Spleen (tissue), 13 donors: ENCODE measurements at regions of chr11 and their contacts with region 1.

Region 1: GRCh38 chr11:32176223-32176934 is 85.5 kb downstream of the RCN1 start:
- DNase-seq: no peak
- H3K4me3 ChIP-seq: no peak overlapping the region
- H3K27ac ChIP-seq: no peak overlapping the region
- H3K4me1 ChIP-seq: peaks cover 0 to 6% (median 0%) of the 10 kb centered on the region in 6 donors
- H3K27me3 ChIP-seq: no peaks in the 10 kb centered on the region
- CTCF ChIP-seq: peak; percentile 68 to 89 (median 81)
- POLR2A ChIP-seq: no peak

Region 2: GRCh38 chr11:31968461-31969358 is 207.7 kb before region 1 on chr11:
- intact Hi-C with region 1: no loop called
- DNase-seq: no peak
- H3K4me3 ChIP-seq: no peak overlapping the region
- H3K27ac ChIP-seq: no peak overlapping the region
- H3K4me1 ChIP-seq: no peaks in the 10 kb centered on the region
- H3K27me3 ChIP-seq: peaks cover 0 to 8% (median 0%) of the 10 kb centered on the region in 7 donors
- CTCF ChIP-seq: no peak
- POLR2A ChIP-seq: no peak

Region 3: DNA sequence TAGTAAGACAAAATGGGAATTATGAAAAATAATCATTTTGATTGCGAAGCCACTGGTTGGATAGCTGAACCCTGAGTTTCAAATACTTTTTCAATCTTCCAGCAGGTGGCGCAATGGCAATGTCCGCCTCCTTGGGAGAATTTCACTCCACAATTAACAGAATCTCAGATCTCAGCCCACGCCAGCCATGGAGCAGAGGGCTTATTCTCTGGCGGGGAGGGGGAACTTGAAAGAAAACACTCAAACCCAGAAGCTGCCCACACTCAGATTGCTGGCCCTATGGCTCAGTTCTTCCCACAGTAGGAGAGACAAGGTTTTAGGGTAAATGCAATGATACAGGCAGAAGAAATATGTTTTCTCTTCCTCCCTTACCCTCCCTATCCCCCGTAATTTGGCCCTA is 124.2 kb before region 1 on chr11:
- intact Hi-C with region 1: loop called (anchors 2 kb)
- DNase-seq: no peak
- H3K4me3 ChIP-seq: no peak overlapping the region
- H3K27ac ChIP-seq: no peak overlapping the region
- H3K4me1 ChIP-seq: no peaks in the 10 kb centered on the region
- H3K27me3 ChIP-seq: peaks cover 0 to 33% (median 0%) of the 10 kb centered on the region in 7 donors
- CTCF ChIP-seq: peak in 10 of 11 experiments; percentile 50 to 79 (median 69)
- POLR2A ChIP-seq: no peak